Activated naive CD4-positive, alpha-beta T cell treated with anti-CD3 and anti-CD28 coated beads for 36 hours (primary cell): ENCODE measurements at regions of chr9 and their contacts with region 1.

Region 1: GRCh38 chr9:15142878-15143534 is 164.0 kb downstream of the TTC39B start:
- DNase-seq: peak; percentile 39
- H3K4me3 Mint-ChIP-seq: no peak overlapping the region
- H3K27ac Mint-ChIP-seq: no peak overlapping the region
- H3K4me1 Mint-ChIP-seq: peaks cover 4% of the 10 kb centered on the region
- H3K27me3 Mint-ChIP-seq: no peaks in the 10 kb centered on the region

Region 2: GRCh38 chr9:14616188-14616982 is 526.6 kb before region 1 on chr9:
- CTCF ChIA-PET with region 1: no interaction called
- intact Hi-C with region 1: loop called (anchors 2 kb)
- DNase-seq: no peak
- H3K4me3 Mint-ChIP-seq: no peak overlapping the region
- H3K27ac Mint-ChIP-seq: no peak overlapping the region
- H3K4me1 Mint-ChIP-seq: no peaks in the 10 kb centered on the region
- H3K27me3 Mint-ChIP-seq: no peaks in the 10 kb centered on the region

Region 3: GRCh38 chr9:14846871-14847311 is 296.1 kb before region 1 on chr9:
- CTCF ChIA-PET with region 1: no interaction called
- intact Hi-C with region 1: loop called (anchors 5 kb)
- DNase-seq: peak; percentile 77
- H3K4me3 Mint-ChIP-seq: no peak overlapping the region
- H3K27ac Mint-ChIP-seq: no peak overlapping the region
- H3K4me1 Mint-ChIP-seq: no peaks in the 10 kb centered on the region
- H3K27me3 Mint-ChIP-seq: peaks cover 2% of the 10 kb centered on the region

Region 4: DNA sequence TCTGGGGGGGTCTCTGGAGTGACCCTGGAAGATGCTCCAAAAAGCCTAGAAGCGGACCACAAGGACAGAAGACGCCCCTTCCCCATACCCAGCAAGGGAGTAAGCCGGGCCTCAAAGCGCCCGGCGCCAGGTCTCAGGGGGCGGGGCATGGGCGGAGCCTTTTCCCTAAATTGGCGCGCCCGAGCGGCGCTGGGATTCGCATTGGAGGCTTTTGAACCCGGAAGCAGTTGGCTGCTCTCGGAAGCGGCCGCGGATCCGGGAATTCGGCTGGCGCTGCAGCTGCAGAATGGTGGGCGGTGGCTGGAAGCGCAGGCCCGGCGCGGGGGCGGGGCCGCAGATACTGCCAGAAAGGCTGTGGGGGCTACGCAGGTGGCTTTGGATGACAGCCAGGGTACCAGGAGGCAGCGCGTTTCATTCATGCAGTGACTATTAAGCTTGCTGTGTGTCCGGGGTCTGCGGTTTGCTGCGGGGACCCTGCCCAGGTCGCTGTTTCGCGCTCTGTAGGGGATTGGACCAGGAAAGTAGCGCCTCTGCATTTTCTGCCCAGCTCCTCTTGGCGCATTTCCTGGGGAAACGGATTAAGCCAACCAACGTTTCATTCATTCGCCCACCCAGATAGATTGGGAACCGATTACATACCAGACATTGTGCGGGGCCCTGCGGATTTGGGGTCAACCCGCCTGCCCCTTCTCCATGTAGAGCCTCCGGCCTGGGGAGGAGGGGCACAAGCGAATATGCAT is 149.8 kb before region 1 on chr9:
- CTCF ChIA-PET with region 1: no interaction called
- intact Hi-C with region 1: loop called (anchors 5 kb)
- DNase-seq: peak; percentile 76
- H3K4me3 Mint-ChIP-seq: peak overlapping the region; percentile 76
- H3K27ac Mint-ChIP-seq: peak overlapping the region; percentile 74
- H3K4me1 Mint-ChIP-seq: peaks cover 30% of the 10 kb centered on the region
- H3K27me3 Mint-ChIP-seq: no peaks in the 10 kb centered on the region

Region 5: GRCh38 chr9:15606643-15607472 is 463.9 kb after region 1 on chr9:
- CTCF ChIA-PET with region 1: no interaction called
- intact Hi-C with region 1: loop called (anchors 10 kb)
- DNase-seq: no peak
- H3K4me3 Mint-ChIP-seq: no peak overlapping the region
- H3K27ac Mint-ChIP-seq: no peak overlapping the region
- H3K4me1 Mint-ChIP-seq: no peaks in the 10 kb centered on the region
- H3K27me3 Mint-ChIP-seq: no peaks in the 10 kb centered on the region